ENCODE measurements at regions of chr2 and their contacts with region 1.

Region 1: GRCh38 chr2:235500761-235501672 is 7.2 kb downstream of the AGAP1 start:
- DNase-seq: no peak
- ATAC-seq: peak in 2 of 4 donors; percentile 36 to 53
- H3K4me3 ChIP-seq: peak overlapping the region in 9 of 12 donors; percentile 2 to 34 (median 23)
- H3K27ac ChIP-seq: peak overlapping the region in 5 of 12 donors; percentile 7 to 67 (median 35)
- H3K4me1 ChIP-seq: peaks cover 2 to 70% (median 41%) of the 10 kb centered on the region in 12 donors
- H3K27me3 ChIP-seq: peaks cover 0 to 3% (median 0%) of the 10 kb centered on the region in 9 donors
- CTCF ChIP-seq: no peak
- POLR2A ChIP-seq: no peak

Region 2: GRCh38 chr2:235551965-235552364 is 50.9 kb after region 1 on chr2:
- intact Hi-C with region 1: loop called in 3 of 10 experiments (anchors 5 to 10 kb)
- DNase-seq: peak in 3 of 5 donors; percentile 37 to 61 (median 37)
- ATAC-seq: peak; percentile 63 to 84 (median 74)
- H3K4me3 ChIP-seq: no peak overlapping the region
- H3K27ac ChIP-seq: no peak overlapping the region
- H3K4me1 ChIP-seq: peaks cover 0 to 25% (median 13%) of the 10 kb centered on the region in 12 donors
- H3K27me3 ChIP-seq: no peaks in the 10 kb centered on the region
- CTCF ChIP-seq: peak in 11 of 12 donors; percentile 30 to 74 (median 57)
- POLR2A ChIP-seq: no peak

Region 3: DNA sequence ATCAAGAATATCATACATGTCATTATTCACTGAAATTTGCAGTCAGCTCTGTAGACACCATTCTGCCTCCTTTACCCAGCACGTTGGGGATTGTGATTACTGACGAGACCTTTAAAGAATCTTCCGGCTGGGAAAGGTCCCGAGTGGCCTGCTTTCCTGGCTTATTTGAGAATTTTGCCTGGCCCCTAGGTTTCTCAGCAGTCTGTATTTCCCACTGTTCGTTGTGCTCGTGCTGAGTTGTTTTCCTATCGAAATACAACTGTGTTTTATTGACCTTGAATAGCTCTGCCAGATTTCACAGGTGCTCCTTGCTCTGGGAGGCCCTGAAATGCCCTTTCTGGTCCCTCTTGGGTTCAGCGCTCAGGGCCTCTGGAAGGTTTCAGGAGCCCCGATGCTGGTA is 87.7 kb after region 1 on chr2:
- intact Hi-C with region 1: loop called in 2 of 10 experiments (anchors 5 kb)
- DNase-seq: no peak
- ATAC-seq: peak in 3 of 4 donors; percentile 31 to 45 (median 31)
- H3K4me3 ChIP-seq: no peak overlapping the region
- H3K27ac ChIP-seq: no peak overlapping the region
- H3K4me1 ChIP-seq: peaks cover 0 to 14% (median 1%) of the 10 kb centered on the region in 12 donors
- H3K27me3 ChIP-seq: no peaks in the 10 kb centered on the region
- CTCF ChIP-seq: no peak
- POLR2A ChIP-seq: no peak

Measured in heart left ventricle (tissue), 16 donors.